ENCODE measurements at regions of chr5 and their contacts with region 1.

Region 1: GRCh38 chr5:177390363-177391300 is 6.4 kb downstream of the SLC34A1 start:
- DNase-seq: peak; percentile 95
- H3K4me3 Mint-ChIP-seq: peak overlapping the region; percentile 10
- H3K27ac Mint-ChIP-seq: peak overlapping the region; percentile 79
- H3K4me1 Mint-ChIP-seq: peaks cover 34% of the 10 kb centered on the region
- H3K27me3 Mint-ChIP-seq: no peaks in the 10 kb centered on the region

Region 2: GRCh38 chr5:177317959-177318377 is 72.7 kb before region 1 on chr5:
- CTCF ChIA-PET with region 1: interaction called, 23 read pairs
- intact Hi-C with region 1: loop called (anchors 2 kb)
- DNase-seq: peak; percentile 90
- H3K4me3 Mint-ChIP-seq: no peak overlapping the region
- H3K27ac Mint-ChIP-seq: no peak overlapping the region
- H3K4me1 Mint-ChIP-seq: peaks cover 19% of the 10 kb centered on the region
- H3K27me3 Mint-ChIP-seq: no peaks in the 10 kb centered on the region

Region 3: GRCh38 chr5:177351385-177352329 is 39.0 kb before region 1 on chr5 and contains the start of gene LMAN2:
- CTCF ChIA-PET with region 1: interaction called, 4 read pairs
- intact Hi-C with region 1: loop called (anchors 5 kb)
- DNase-seq: peak; percentile 96
- H3K4me3 Mint-ChIP-seq: peak within 1 kb of the TSS; percentile 95
- H3K27ac Mint-ChIP-seq: peak within 1 kb of the TSS; percentile 100
- H3K4me1 Mint-ChIP-seq: peaks cover 43% of the 10 kb centered on the region
- H3K27me3 Mint-ChIP-seq: no peaks in the 10 kb centered on the region
- total RNA-seq, gene LMAN2: 82.2 to 83.9 TPM

Region 4: GRCh38 chr5:177370488-177371119 is 20.0 kb before region 1 on chr5:
- CTCF ChIA-PET with region 1: interaction called, 77 read pairs
- intact Hi-C with region 1: loop called (anchors 1 kb)
- DNase-seq: peak; percentile 75
- H3K4me3 Mint-ChIP-seq: peak overlapping the region; percentile 74
- H3K27ac Mint-ChIP-seq: no peak overlapping the region
- H3K4me1 Mint-ChIP-seq: peaks cover 70% of the 10 kb centered on the region
- H3K27me3 Mint-ChIP-seq: no peaks in the 10 kb centered on the region

Region 5: GRCh38 chr5:177440211-177440971 is 49.8 kb after region 1 on chr5:
- CTCF ChIA-PET with region 1: interaction called, 45 read pairs
- intact Hi-C with region 1: no loop called
- DNase-seq: peak; percentile 84
- H3K4me3 Mint-ChIP-seq: no peak overlapping the region
- H3K27ac Mint-ChIP-seq: peak overlapping the region; percentile 90
- H3K4me1 Mint-ChIP-seq: peaks cover 66% of the 10 kb centered on the region
- H3K27me3 Mint-ChIP-seq: no peaks in the 10 kb centered on the region

Region 6: DNA sequence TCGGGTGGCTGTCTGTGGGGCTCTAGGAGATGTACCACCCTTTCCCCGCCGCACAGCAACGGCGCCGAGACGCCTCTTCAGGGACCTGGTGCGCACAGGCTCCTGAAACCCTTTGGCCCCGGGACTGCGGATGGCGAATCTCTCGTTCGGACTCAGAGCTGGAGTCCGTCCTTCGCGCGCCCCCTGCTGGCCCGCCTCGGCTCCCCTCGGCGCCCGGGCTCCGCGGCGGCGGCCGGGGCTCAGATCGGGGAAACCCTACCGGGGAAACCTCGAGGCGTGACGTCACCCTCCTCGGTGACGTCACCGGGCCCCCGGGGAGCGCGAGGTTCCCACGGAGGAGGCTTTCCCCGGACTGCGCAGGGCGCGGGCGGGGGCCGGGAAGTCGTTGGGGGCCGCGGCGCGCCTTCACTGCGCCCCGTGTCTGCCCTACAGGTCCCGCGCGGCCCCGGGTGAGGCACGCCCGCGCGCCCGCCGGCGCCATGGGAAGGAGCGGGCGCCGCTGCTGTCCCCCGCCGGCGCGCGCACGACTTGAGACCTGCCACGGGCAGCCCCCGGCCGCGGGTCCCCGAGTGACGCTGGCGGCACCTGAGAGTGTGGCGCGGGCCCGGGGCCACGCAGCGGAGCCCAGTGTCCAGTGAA is 63.9 kb after region 1 on chr5:
- CTCF ChIA-PET with region 1: interaction called, 125 read pairs
- intact Hi-C with region 1: loop called (anchors 1 kb)
- DNase-seq: peak; percentile 91
- H3K4me3 Mint-ChIP-seq: peak overlapping the region; percentile 79
- H3K27ac Mint-ChIP-seq: no peak overlapping the region
- H3K4me1 Mint-ChIP-seq: peaks cover 20% of the 10 kb centered on the region
- H3K27me3 Mint-ChIP-seq: no peaks in the 10 kb centered on the region

Region 7: GRCh38 chr5:177507165-177507564 is 116.5 kb after region 1 on chr5:
- CTCF ChIA-PET with region 1: interaction called, 72 read pairs
- intact Hi-C with region 1: no loop called
- DNase-seq: no peak
- H3K4me3 Mint-ChIP-seq: no peak overlapping the region
- H3K27ac Mint-ChIP-seq: no peak overlapping the region
- H3K4me1 Mint-ChIP-seq: peaks cover 2% of the 10 kb centered on the region
- H3K27me3 Mint-ChIP-seq: no peaks in the 10 kb centered on the region